ENCODE measurements at regions of chr2 and their contacts with region 1.

Region 1: GRCh38 chr2:219851801-219852481 is 224.5 kb downstream of the SLC4A3 start:
- DNase-seq: no peak
- H3K4me3 ChIP-seq: no peak overlapping the region
- H3K27ac ChIP-seq: no peak overlapping the region
- H3K4me1 ChIP-seq: peaks cover 0 to 5% (median 2%) of the 10 kb centered on the region in 4 experiments; a peak in 5 of 7 replicates
- H3K27me3 ChIP-seq: peaks cover 0 to 2% (median 0%) of the 10 kb centered on the region in 4 experiments; a peak in 2 of 7 replicates
- CTCF ChIP-seq: no peak
- EP300 ChIP-seq: no peak
- POLR2A ChIP-seq: no peak
- RAD21 ChIP-seq: no peak

Region 2: DNA sequence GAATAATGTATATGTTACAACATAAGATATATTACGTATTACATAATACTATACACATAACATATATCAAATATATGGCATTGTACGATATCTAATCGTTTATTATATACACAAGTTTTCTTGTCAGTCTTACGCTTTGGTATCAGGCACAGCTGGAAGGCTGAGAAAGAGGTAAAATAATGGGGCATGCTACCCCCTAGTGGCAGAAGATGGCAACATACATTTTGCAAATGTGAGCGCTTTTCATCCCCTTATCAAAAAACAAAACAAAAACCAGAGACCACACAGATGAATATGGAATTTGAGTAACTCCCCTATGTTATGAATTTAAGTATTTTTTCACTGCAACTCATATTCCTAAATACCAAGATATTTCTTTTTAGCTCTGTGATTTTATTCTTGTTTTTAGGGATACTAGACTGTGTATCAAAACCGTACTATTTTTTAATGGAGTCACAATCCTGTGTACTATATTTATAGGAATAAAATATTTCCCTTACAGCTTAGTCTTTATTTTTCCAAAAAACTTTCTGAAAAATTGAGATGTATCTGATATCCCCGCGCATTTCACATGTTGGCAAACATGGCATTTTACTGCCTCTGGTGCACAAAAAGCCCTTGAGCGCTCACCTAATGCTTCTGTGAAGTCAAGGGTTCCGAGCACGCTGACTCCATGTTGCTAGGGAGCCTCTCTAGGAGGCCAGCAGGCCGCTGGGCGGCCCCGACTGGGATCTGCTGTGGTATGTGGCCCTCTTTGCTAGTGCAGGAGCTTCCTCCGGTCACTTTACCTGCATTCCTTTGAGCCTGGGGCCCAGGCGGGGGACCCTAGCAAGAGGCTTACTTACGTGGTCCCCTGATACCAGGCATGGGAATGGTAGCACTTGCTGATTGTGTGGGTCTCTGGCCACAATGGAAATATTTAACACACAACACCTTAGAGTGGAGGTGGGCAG is 162.0 kb before region 1 on chr2:
- CTCF ChIA-PET with region 1: no interaction called
- POLR2A ChIA-PET with region 1: no interaction called
- DNase-seq: peak in 1 of 2 experiments; percentile 66
- H3K4me3 ChIP-seq: no peak overlapping the region; a peak in 1 of 8 replicates
- H3K27ac ChIP-seq: no peak overlapping the region
- H3K4me1 ChIP-seq: peaks cover 0 to 11% (median 2%) of the 10 kb centered on the region in 4 experiments; a peak in 6 of 7 replicates
- H3K27me3 ChIP-seq: no peaks in the 10 kb centered on the region
- CTCF ChIP-seq: peak in 2 of 3 experiments; percentile 69 to 82; a peak in 3 of 4 replicates
- EP300 ChIP-seq: no peak
- POLR2A ChIP-seq: no peak
- RAD21 ChIP-seq: peak; percentile 72 to 83

Region 3: DNA sequence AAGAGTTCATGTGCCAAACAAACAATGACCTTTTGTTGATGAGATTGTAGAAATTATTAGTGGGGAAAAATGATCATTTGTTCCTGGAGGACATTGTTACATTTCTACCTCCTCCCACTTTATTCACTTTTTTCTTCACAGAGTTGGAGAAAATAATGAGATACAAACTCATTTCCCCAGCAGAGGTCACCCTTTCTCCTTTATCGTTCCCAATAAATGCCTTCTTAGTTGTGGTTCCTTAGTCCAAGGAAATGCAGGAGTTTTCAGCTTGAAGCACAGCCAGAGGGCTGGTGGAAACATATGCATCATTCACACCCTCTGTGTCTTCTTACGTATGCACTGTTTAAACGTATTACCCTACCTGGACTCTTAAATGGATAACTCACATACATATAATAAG is 115.7 kb before region 1 on chr2:
- CTCF ChIA-PET with region 1: interaction called, 48 read pairs
- POLR2A ChIA-PET with region 1: no interaction called
- DNase-seq: no peak
- H3K4me3 ChIP-seq: no peak overlapping the region
- H3K27ac ChIP-seq: no peak overlapping the region
- H3K4me1 ChIP-seq: no peaks in the 10 kb centered on the region; a peak in 1 of 7 replicates
- H3K27me3 ChIP-seq: no peaks in the 10 kb centered on the region
- CTCF ChIP-seq: peak in 2 of 3 experiments; percentile 56 to 60; a peak in 3 of 4 replicates
- EP300 ChIP-seq: no peak
- POLR2A ChIP-seq: no peak
- RAD21 ChIP-seq: peak; percentile 88

Region 4: GRCh38 chr2:219929835-219930234 is 77.9 kb after region 1 on chr2:
- CTCF ChIA-PET with region 1: no interaction called
- POLR2A ChIA-PET with region 1: no interaction called
- DNase-seq: no peak
- H3K4me3 ChIP-seq: no peak overlapping the region
- H3K27ac ChIP-seq: no peak overlapping the region
- H3K4me1 ChIP-seq: no peaks in the 10 kb centered on the region
- H3K27me3 ChIP-seq: no peaks in the 10 kb centered on the region; a peak in 1 of 7 replicates
- CTCF ChIP-seq: no peak
- EP300 ChIP-seq: no peak
- POLR2A ChIP-seq: no peak
- RAD21 ChIP-seq: no peak

Measured in H1 (cell line).